Mammary epithelial cell (primary cell): ENCODE measurements at regions of chr16 and their contacts with region 1.

Region 1: DNA sequence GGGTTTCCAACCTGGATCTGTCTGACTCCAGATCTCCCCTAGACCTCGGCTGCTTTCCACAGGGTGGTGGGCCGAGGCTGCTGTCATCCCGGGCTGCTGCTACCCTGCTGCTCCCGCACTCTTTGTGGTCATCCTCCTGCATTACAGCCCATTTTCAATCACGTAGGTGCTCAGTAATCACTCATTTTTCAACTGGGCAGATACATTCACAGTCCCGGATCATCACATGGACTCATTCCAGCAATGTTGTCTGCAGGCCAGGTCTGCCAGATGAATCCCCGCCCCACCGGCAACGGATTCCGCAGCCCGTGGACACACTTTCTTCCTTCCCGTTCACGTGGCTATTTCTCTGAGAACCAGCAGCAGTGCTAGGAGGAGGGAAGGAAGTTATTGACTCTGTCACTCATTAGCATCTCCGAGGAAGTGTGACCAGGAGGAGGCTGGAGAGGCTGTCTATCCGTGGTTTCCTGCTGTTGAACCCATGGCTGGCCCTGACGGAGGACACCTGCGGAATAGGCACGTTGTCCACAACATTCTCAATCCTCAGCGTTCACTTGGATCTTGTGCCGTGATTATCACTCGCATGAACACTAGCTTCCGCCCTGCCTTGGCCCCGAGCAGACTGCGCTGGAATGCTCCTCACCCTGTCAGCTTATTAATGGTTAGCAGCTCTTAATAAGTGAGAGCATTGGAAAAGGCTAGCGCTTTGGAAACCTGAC is 14.7 kb upstream of the ZCCHC14 start:
- DNase-seq: no peak
- H3K4me3 ChIP-seq: no peak overlapping the region
- H3K27ac ChIP-seq: no peak overlapping the region
- H3K4me1 ChIP-seq: no peaks in the 10 kb centered on the region
- H3K27me3 ChIP-seq: no peaks in the 10 kb centered on the region
- CTCF ChIP-seq: no peak

Region 2: DNA sequence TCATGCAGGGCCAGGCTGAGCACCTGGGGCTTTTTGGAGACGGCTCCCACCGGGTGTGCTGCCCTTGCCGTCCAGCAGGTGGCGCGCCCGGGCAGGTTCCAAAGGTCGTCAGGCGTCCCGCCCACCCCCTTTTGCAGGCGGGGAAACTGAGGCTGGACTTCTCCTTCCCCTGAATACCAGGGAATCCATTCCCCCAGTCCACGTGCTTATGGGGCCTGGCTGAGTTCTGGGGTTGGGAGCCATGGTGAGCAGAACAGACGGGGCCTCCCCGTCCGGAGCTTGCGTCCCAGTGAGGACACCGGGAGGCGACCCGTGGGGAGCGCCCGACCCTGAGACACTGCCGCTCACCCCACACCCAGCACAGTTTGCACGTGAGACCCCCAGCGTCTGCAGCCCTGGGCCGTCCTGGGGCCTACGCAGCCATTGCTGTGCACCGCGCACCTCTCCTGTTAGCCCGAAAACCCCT is 43.0 kb after region 1 on chr16:
- CTCF ChIA-PET with region 1: no interaction called
- dilution Hi-C with region 1: no loop called
- in situ Hi-C with region 1: no loop called
- intact Hi-C with region 1: no loop called
- DNase-seq: no peak
- H3K4me3 ChIP-seq: no peak overlapping the region
- H3K27ac ChIP-seq: no peak overlapping the region
- H3K4me1 ChIP-seq: no peaks in the 10 kb centered on the region
- H3K27me3 ChIP-seq: no peaks in the 10 kb centered on the region
- CTCF ChIP-seq: peak; percentile 76 to 92

Region 3: GRCh38 chr16:87571136-87571867 is 63.8 kb after region 1 on chr16:
- CTCF ChIA-PET with region 1: no interaction called
- dilution Hi-C with region 1: loop called (anchors 5 kb)
- in situ Hi-C with region 1: no loop called
- intact Hi-C with region 1: no loop called
- DNase-seq: no peak
- H3K4me3 ChIP-seq: no peak overlapping the region
- H3K27ac ChIP-seq: no peak overlapping the region
- H3K4me1 ChIP-seq: no peaks in the 10 kb centered on the region
- H3K27me3 ChIP-seq: peaks cover 5% of the 10 kb centered on the region
- CTCF ChIP-seq: peak in 1 of 2 donors; percentile 60

Region 4: DNA sequence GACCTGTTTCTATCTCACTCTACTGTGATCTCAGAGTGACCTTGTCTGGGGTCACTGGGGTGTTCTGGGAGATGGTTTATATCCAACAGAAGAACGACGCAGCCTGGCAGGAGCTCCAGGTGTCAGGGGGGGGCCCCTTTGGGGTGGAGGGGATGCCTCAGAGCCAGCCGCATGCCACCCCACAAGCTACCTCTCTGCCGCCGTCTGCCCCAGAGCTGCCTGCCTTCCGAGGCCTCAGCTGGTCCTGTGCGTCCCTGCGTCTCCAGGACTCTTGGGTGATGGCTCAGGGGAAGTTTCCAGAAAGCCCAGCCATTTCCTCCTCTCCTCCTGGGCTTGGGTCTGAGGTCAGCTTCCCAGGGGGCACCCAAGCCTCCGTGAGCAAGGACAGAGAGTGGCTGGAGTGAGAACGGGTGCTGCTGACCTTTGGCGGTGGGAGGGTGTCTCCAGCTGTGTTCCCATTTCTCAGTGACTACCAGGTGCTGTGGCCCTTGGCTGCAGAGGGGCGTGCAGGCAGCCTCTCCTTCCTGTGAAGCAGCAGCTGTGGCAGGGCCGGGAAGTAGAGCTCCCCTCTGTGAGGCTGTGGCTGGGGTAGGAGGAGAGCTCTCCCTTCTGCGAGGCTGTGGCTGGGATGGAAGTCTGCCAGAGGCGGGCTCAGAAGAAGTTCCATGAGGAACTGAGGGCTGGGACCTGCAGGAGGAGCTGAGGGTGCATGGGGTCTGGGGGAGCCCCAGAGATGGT is 114.6 kb after region 1 on chr16:
- CTCF ChIA-PET with region 1: no interaction called
- dilution Hi-C with region 1: no loop called
- in situ Hi-C with region 1: no loop called
- intact Hi-C with region 1: no loop called
- DNase-seq: no peak
- H3K4me3 ChIP-seq: no peak overlapping the region
- H3K27ac ChIP-seq: no peak overlapping the region
- H3K4me1 ChIP-seq: peaks cover 10% of the 10 kb centered on the region
- H3K27me3 ChIP-seq: peaks cover 6% of the 10 kb centered on the region
- CTCF ChIP-seq: no peak